IMR-90 (cell line): ENCODE measurements at regions of chr2 and their contacts with region 1.

Region 1: DNA sequence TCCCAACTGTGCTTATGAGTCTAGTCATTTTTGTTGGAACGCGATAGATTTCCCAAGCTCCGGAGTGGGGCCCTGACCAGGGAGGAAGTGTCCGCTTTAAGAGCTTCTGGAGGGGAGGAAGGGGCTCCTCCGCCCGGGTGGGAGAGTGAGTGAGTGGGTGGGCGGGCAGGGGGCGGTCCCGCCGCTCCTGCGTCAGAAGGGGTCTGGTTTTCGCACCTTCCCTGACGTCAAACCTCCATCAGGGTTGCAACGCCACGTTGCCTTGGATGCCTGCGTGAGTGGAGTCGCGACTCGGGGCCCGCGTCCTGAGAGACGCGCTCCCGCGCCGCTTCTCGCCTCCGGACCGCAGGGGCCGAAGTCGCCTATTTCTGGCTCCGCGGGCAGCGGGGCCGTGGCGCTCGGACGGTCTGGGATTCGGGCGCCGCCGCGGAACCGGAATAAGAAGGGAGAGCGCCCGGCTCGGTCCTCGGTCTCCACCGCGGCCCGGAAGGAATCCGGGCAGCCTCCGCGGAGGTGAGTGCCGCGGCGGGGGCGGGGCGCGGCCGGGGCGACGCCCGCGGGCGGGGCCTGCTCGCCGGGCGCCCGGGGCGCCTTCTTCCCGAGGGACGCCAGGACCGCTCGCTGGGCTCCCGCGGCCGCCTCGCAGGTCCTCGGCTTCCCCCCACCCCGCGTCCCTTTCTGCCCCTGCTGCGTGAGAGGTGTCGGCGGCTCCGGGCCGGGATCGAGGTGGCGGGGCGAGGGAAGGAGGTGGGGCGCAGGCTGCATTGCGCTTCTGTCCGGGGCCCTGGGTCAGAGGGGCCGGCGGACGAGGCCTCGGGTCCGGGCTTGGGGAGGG is at the start of gene ZDBF2:
- DNase-seq: peak; percentile 81
- ATAC-seq: peak; percentile 93
- H3K4me3 ChIP-seq: peak within 1 kb of the TSS; percentile 65
- H3K27ac ChIP-seq: peak within 1 kb of the TSS; percentile 46
- H3K4me1 ChIP-seq: no peaks in the 10 kb centered on the region
- H3K27me3 ChIP-seq: peaks cover 12% of the 10 kb centered on the region
- CTCF ChIP-seq: no peak
- POLR2A ChIP-seq: peak; percentile 76
- RAD21 ChIP-seq: no peak
- total RNA-seq, gene ZDBF2: 10.2 and 16.7 TPM in 2 replicates

Region 2: DNA sequence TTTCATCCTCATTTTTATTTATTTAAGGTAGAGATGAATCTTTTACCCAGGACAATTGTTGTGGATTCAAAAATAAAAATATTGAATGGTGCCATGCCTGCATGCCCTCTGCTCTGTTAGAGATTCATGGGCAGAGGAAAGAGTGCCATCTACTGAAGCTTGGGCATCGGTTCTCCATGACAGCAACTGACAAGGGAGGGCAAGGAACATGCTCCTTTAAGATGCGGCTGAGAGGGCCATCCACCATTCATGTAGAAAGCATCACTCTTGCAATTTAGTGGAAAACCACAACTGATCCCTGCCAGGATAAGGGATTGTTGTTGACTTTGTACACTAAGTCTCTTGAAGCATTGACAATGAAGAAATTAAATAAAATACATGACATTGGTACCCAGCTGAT is 1649.5 kb before region 1 on chr2:
- CTCF ChIA-PET with region 1: no interaction called
- POLR2A ChIA-PET with region 1: no interaction called
- dilution Hi-C with region 1: no loop called
- in situ Hi-C with region 1: no loop called
- intact Hi-C with region 1: no loop called
- DNase-seq: no peak
- ATAC-seq: no peak
- H3K4me3 ChIP-seq: no peak overlapping the region
- H3K27ac ChIP-seq: no peak overlapping the region
- H3K4me1 ChIP-seq: no peaks in the 10 kb centered on the region
- H3K27me3 ChIP-seq: no peaks in the 10 kb centered on the region
- CTCF ChIP-seq: 0 out of 2 replicates have a peak, but pooled peaks have one; percentile 19
- POLR2A ChIP-seq: no peak
- RAD21 ChIP-seq: peak; percentile 31; the same call in 1 of the 2 replicates

Region 3: DNA sequence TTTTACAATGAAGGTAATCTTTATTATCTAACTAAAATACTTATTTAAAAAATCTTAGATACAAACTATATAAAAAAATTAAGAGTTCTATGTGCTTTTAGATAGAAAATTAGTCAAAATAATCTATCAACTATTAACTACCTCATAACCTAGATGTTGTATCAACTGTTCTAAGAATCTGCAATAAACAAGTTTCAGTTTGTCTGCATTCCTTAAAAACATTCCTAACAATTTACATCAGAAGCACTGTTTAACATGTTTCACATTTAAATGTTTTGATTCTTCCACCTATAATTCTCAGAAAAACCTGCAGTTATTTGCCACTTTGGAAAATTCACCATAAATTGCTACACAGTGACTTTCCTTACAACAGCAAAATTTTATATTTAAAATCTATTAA is 148.7 kb before region 1 on chr2:
- CTCF ChIA-PET with region 1: no interaction called
- POLR2A ChIA-PET with region 1: no interaction called
- dilution Hi-C with region 1: no loop called
- in situ Hi-C with region 1: no loop called
- intact Hi-C with region 1: no loop called
- DNase-seq: peak; percentile 12
- ATAC-seq: peak; percentile 78
- H3K4me3 ChIP-seq: no peak overlapping the region
- H3K27ac ChIP-seq: no peak overlapping the region
- H3K4me1 ChIP-seq: no peaks in the 10 kb centered on the region; the same call in 1 of the 2 replicates
- H3K27me3 ChIP-seq: no peaks in the 10 kb centered on the region
- CTCF ChIP-seq: no peak
- POLR2A ChIP-seq: no peak
- RAD21 ChIP-seq: no peak

Region 4: DNA sequence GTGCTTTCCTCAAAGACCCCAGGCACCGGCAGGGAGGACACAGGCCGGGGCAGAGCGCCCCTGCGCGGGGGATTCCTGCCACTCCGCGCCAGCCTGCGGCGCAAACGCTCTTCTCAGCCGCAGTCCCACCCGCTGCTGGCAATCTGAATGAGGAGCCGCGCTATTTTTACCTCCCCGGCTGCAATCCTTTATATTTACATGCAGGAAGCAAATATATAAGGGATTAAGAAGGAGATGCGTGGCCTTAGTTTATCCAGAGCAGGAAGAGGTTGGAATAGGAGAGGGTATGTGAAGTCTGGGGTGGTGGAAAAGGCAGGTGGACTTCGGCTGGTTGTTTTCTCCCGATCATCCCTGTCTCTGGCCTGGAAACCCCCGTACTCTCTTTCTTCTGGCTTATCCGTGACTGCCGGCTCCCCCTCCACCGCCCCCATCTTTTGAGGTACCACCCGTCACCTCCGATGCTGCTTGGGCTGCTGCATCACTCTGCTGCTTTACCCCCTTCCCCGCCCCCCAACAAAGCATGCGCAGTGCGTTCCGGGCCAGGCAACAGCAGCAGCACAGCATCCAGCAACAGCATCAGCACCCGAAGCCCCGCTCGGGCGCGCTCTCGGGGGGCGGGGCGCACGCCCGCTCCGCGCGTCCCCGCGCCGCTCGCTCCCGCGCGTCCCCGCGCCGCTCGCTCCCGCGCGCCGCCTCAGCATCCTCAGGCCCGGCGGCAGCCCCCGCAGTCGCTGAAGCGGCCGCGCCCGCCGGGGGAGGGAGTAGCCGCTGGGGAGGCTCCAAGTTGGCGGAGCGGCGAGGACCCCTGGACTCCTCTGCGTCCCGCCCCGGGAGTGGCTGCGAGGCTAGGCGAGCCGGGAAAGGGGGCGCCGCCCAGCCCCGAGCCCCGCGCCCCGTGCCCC is 168.4 kb after region 1 on chr2 and contains the start of gene ADAM23:
- CTCF ChIA-PET with region 1: no interaction called
- POLR2A ChIA-PET with region 1: no interaction called
- dilution Hi-C with region 1: no loop called
- in situ Hi-C with region 1: no loop called
- intact Hi-C with region 1: loop called (anchors 5 kb)
- DNase-seq: peak; percentile 52
- ATAC-seq: peak; percentile 82
- H3K4me3 ChIP-seq: peak within 1 kb of the TSS; percentile 79
- H3K27ac ChIP-seq: peak within 1 kb of the TSS; percentile 60
- H3K4me1 ChIP-seq: no peaks in the 10 kb centered on the region
- H3K27me3 ChIP-seq: peaks cover 24% of the 10 kb centered on the region
- CTCF ChIP-seq: 0 out of 2 replicates have a peak, but pooled peaks have one; percentile 13
- POLR2A ChIP-seq: no peak
- RAD21 ChIP-seq: no peak
- total RNA-seq, gene ADAM23: 2.9 and 3.9 TPM in 2 replicates